Heart left ventricle (tissue), 16 donors: ENCODE measurements at regions of chr6 and their contacts with region 1.

Region 1: GRCh38 chr6:32244946-32245398 is 21.1 kb upstream of the NOTCH4 start:
- DNase-seq: peak; percentile 84 to 88 (median 87)
- ATAC-seq: peak; percentile 66 to 95 (median 90)
- H3K4me3 ChIP-seq: peak overlapping the region in 7 of 12 donors; percentile 9 to 30 (median 23)
- H3K27ac ChIP-seq: peak overlapping the region; percentile 34 to 82 (median 66)
- H3K4me1 ChIP-seq: peaks cover 0 to 17% (median 12%) of the 10 kb centered on the region in 12 donors
- H3K27me3 ChIP-seq: no peaks in the 10 kb centered on the region
- CTCF ChIP-seq: peak; percentile 87 to 98 (median 92)
- POLR2A ChIP-seq: no peak

Region 2: GRCh38 chr6:32092760-32093497 is 152.0 kb before region 1 on chr6:
- intact Hi-C with region 1: no loop called
- DNase-seq: no peak
- ATAC-seq: peak; percentile 18 to 48 (median 44)
- H3K4me3 ChIP-seq: no peak overlapping the region
- H3K27ac ChIP-seq: peak overlapping the region in 11 of 12 donors; percentile 13 to 77 (median 41)
- H3K4me1 ChIP-seq: peaks cover 2 to 41% (median 20%) of the 10 kb centered on the region in 12 donors
- H3K27me3 ChIP-seq: peaks cover 6 to 30% (median 14%) of the 10 kb centered on the region in 9 donors
- CTCF ChIP-seq: no peak
- POLR2A ChIP-seq: no peak

Region 3: GRCh38 chr6:32118782-32119628 is 126.0 kb before region 1 on chr6:
- intact Hi-C with region 1: loop called in 2 of 10 experiments (anchors 2 to 10 kb)
- DNase-seq: peak; percentile 86 to 92 (median 87)
- ATAC-seq: peak; percentile 76 to 81 (median 80)
- H3K4me3 ChIP-seq: peak overlapping the region in 1 of 12 donors; percentile 16
- H3K27ac ChIP-seq: peak overlapping the region in 9 of 12 donors; percentile 7 to 66 (median 50)
- H3K4me1 ChIP-seq: peaks cover 0 to 27% (median 19%) of the 10 kb centered on the region in 12 donors
- H3K27me3 ChIP-seq: no peaks in the 10 kb centered on the region
- CTCF ChIP-seq: peak; percentile 90 to 99 (median 94)
- POLR2A ChIP-seq: no peak

Region 4: GRCh38 chr6:32271429-32271828 is 26.5 kb after region 1 on chr6:
- intact Hi-C with region 1: loop called in 1 of 10 experiments (anchors 1 kb)
- DNase-seq: no peak
- ATAC-seq: no peak
- H3K4me3 ChIP-seq: no peak overlapping the region
- H3K27ac ChIP-seq: peak overlapping the region in 1 of 12 donors; percentile 63
- H3K4me1 ChIP-seq: peaks cover 0 to 6% (median 0%) of the 10 kb centered on the region in 12 donors
- H3K27me3 ChIP-seq: peaks cover 0 to 3% (median 0%) of the 10 kb centered on the region in 9 donors
- CTCF ChIP-seq: no peak
- POLR2A ChIP-seq: no peak

Region 5: GRCh38 chr6:32413427-32414047 is 168.6 kb after region 1 on chr6:
- intact Hi-C with region 1: loop called in 5 of 10 experiments (anchors 5 to 10 kb)
- DNase-seq: peak; percentile 77 to 91 (median 78)
- ATAC-seq: peak in 3 of 4 donors; percentile 69 to 89 (median 85)
- H3K4me3 ChIP-seq: no peak overlapping the region
- H3K27ac ChIP-seq: no peak overlapping the region
- H3K4me1 ChIP-seq: peaks cover 0 to 17% (median 0%) of the 10 kb centered on the region in 12 donors
- H3K27me3 ChIP-seq: peaks cover 0 to 65% (median 11%) of the 10 kb centered on the region in 9 donors
- CTCF ChIP-seq: peak; percentile 88 to 97 (median 94)
- POLR2A ChIP-seq: no peak

Region 6: DNA sequence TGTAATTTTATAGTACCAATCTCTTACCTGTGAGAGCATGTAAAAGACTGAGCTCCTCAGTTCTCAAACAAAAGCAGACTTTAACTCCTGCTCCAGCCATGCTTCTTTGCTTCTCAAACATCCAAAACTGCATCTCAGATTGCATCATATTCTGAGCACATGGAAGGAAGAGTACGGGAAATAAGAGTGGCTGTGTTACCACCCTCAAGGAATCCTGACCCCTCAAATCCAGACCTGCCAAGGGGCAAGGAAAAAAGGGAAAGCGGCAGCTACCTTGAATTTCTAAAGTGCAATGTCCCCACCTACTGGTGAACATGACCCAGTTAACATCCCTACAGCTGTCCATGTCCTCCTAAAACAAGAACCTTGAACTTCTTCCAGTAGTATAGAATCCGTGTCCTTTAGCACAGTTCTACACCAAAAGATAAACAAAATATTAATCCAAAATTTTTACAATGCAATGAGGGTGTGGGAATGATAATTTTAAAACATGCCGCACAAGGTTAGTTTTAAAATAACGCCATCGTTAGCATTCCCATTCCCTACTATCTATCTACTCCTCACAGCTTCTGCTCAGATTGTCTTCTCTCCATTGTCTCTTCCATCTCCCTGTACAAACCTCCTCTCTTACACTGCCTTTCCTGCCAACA is 455.5 kb after region 1 on chr6:
- intact Hi-C with region 1: loop called in 6 of 10 experiments (anchors 5 to 10 kb)
- DNase-seq: peak in 2 of 5 donors; percentile 29 to 41
- ATAC-seq: peak; percentile 42 to 89 (median 70)
- H3K4me3 ChIP-seq: no peak overlapping the region
- H3K27ac ChIP-seq: no peak overlapping the region
- H3K4me1 ChIP-seq: peaks cover 0 to 3% (median 0%) of the 10 kb centered on the region in 12 donors
- H3K27me3 ChIP-seq: peaks cover 0 to 18% (median 8%) of the 10 kb centered on the region in 9 donors
- CTCF ChIP-seq: peak; percentile 27 to 81 (median 66)
- POLR2A ChIP-seq: no peak